ENCODE measurements at regions of chr14 and their contacts with region 1.

Region 1: DNA sequence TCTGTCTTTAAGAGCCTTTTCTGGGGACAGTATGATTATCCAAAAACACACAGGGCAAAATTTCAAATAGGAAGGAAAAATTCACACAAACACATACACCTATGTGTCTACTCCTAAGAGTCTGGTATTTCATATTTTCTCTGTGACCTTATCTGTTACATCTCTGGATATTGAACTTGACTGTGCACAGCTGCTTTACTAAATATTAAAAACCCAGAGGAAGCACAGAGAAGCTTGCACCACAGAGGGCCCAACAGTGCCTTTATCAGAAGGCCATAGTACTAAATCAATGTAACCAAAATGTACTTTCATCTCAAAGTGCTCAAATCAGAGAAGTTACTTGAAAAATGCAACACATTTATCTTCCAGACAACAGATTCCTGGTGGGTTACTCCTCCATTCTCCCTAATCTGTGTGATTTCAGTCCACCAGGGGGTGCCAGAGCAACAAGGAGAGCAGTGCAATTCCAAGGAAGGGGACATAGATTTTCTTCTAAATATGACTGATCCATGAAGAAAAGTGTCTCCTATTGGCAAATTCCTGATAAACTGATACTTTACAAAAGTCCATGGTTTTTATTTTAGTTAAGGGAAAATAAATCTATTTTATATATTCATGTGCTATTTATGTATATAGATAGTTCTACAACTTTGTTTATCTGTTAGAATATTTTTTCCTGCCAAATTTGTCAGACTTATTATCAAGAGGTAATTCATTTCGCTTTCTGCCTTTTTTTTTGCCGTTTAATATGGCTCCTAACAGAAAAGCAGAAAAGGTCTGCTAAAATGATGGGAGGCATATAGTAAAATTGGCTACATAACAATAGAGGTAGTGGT is 617.6 kb downstream of the LRFN5 start:
- DNase-seq: no peak
- ATAC-seq: no peak
- H3K4me3 Mint-ChIP-seq: no peak overlapping the region
- H3K27ac Mint-ChIP-seq: peak overlapping the region; percentile 30
- H3K4me1 Mint-ChIP-seq: peaks cover 22% of the 10 kb centered on the region
- H3K27me3 Mint-ChIP-seq: no peaks in the 10 kb centered on the region
- CTCF ChIP-seq: no peak

Region 2: GRCh38 chr14:41925409-41925808 is 298.9 kb before region 1 on chr14:
- CTCF ChIA-PET with region 1: no interaction called
- POLR2A ChIA-PET with region 1: no interaction called
- intact Hi-C with region 1: loop called (anchors 2 kb)
- DNase-seq: no peak
- ATAC-seq: peak; percentile 54
- H3K4me3 Mint-ChIP-seq: no peak overlapping the region
- H3K27ac Mint-ChIP-seq: no peak overlapping the region
- H3K4me1 Mint-ChIP-seq: no peaks in the 10 kb centered on the region
- H3K27me3 Mint-ChIP-seq: no peaks in the 10 kb centered on the region
- CTCF ChIP-seq: no peak

Region 3: GRCh38 chr14:42110166-42110723 is 114.0 kb before region 1 on chr14:
- CTCF ChIA-PET with region 1: no interaction called
- POLR2A ChIA-PET with region 1: no interaction called
- intact Hi-C with region 1: loop called (anchors 5 kb)
- DNase-seq: no peak
- ATAC-seq: peak; percentile 74
- H3K4me3 Mint-ChIP-seq: no peak overlapping the region
- H3K27ac Mint-ChIP-seq: no peak overlapping the region
- H3K4me1 Mint-ChIP-seq: peaks cover 4% of the 10 kb centered on the region
- H3K27me3 Mint-ChIP-seq: no peaks in the 10 kb centered on the region
- CTCF ChIP-seq: no peak

Region 4: DNA sequence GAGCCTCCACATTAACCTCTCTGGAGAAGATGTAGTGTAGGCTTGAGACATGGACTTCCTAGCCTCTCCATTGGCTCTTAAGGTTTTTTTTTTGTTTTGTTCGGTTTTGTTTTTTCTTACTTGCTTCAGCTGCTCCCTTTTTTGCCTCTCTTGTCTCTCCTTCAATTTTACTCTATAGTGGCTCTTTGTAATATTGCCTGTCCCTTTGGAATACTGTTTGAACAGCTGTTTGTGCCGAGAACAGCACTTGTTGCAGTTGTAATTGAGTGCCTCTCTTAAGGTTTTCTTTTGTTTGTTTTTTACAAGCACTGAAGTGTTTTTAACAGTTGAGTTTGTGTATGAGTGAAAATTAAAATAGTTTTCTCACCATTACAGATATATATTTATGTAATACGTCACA is 49.9 kb before region 1 on chr14:
- CTCF ChIA-PET with region 1: no interaction called
- POLR2A ChIA-PET with region 1: no interaction called
- intact Hi-C with region 1: no loop called
- DNase-seq: no peak
- ATAC-seq: no peak
- H3K4me3 Mint-ChIP-seq: no peak overlapping the region
- H3K27ac Mint-ChIP-seq: no peak overlapping the region
- H3K4me1 Mint-ChIP-seq: no peaks in the 10 kb centered on the region
- H3K27me3 Mint-ChIP-seq: no peaks in the 10 kb centered on the region
- CTCF ChIP-seq: no peak

Region 5: DNA sequence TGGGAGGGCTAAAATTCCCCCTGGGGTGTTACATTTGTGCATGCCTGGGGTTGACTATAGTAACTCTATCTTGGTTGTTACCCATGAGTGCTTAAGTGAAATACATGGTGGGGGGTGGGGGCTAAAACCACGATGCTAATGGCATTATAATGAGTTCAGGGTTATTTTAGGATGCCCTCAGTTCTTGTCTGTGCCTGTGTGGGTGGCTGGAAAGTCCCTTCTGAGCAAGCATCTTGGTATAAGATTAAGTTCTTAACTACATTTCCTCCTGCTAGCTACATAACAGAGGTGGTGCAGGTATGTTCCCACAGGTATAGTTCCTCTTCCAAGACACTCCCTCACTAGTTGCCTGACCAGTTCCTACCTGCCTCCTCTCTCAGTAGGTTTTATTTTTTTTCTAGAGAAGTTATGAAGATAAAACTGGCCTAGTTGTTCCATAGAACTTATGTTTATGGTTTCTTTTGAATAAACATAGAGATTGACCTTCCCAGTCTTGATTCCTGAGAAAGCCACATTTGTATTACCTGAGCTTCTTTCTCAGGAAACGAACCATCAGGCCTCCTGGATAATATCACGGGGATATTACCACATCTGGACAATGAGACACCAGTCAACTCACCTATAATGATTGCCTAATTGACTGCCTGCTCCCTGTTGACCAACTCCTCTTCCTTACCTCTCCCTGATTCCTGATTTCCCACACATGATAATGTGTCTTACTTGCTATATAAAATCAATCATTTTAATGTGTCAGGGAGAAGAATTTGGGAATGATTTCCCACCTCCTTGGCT is 204.9 kb after region 1 on chr14:
- CTCF ChIA-PET with region 1: no interaction called
- POLR2A ChIA-PET with region 1: no interaction called
- intact Hi-C with region 1: loop called (anchors 2 kb)
- DNase-seq: peak; percentile 24
- ATAC-seq: peak; percentile 95
- H3K4me3 Mint-ChIP-seq: peak overlapping the region; percentile 12
- H3K27ac Mint-ChIP-seq: peak overlapping the region; percentile 80
- H3K4me1 Mint-ChIP-seq: peaks cover 28% of the 10 kb centered on the region
- H3K27me3 Mint-ChIP-seq: no peaks in the 10 kb centered on the region
- CTCF ChIP-seq: no peak